ENCODE measurements at regions of chr18 and their contacts with region 1.

Region 1: DNA sequence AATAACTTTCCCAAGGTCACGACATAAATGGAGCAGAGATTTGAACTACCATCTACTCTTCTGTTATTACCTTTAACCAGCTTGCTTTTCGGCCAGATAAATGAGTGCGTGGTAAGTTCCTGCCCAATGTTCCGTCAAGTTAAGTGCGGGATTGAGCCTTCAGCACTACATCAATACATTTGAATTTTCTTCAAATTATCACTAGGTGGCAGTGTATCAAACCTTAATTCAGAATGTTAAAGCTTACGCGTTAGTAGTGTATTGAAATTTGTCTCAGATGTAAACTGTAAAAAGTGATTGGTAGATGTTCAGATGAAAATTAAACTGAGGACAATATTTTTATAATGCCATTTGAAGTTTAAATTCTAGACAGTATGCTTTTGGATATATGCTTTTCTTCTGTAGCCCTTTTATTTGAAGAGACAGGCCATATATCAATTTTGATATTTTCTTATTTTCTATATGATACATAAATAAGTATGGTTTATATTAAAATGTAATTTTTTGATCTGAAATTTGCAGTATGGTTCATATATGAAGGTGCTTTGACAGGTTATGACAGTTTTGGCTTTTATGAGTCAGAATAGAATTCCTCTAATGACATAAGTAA is 681.3 kb downstream of the ADCYAP1 start:
- DNase-seq: no peak
- ATAC-seq: no peak
- H3K4me3 ChIP-seq: no peak overlapping the region
- H3K27ac ChIP-seq: no peak overlapping the region
- H3K4me1 ChIP-seq: no peaks in the 10 kb centered on the region
- H3K27me3 ChIP-seq: no peaks in the 10 kb centered on the region
- CTCF ChIP-seq: peak in 1 of 5 experiments; percentile 25
- POLR2A ChIP-seq: no peak

Region 2: GRCh38 chr18:2536493-2536892 is 950.5 kb after region 1 on chr18:
- in situ Hi-C with region 1: no loop called
- intact Hi-C with region 1: loop called (anchors 5 kb)
- DNase-seq: no peak
- ATAC-seq: no peak
- H3K4me3 ChIP-seq: no peak overlapping the region
- H3K27ac ChIP-seq: no peak overlapping the region
- H3K4me1 ChIP-seq: peaks cover 0 to 3% of the 10 kb centered on the region in 2 donors
- H3K27me3 ChIP-seq: no peaks in the 10 kb centered on the region
- CTCF ChIP-seq: no peak
- POLR2A ChIP-seq: no peak

Region 3: GRCh38 chr18:2559249-2559648 is 973.3 kb after region 1 on chr18:
- in situ Hi-C with region 1: loop called in 1 of 4 experiments (anchors 10 kb)
- intact Hi-C with region 1: no loop called
- DNase-seq: no peak
- ATAC-seq: no peak
- H3K4me3 ChIP-seq: no peak overlapping the region
- H3K27ac ChIP-seq: no peak overlapping the region
- H3K4me1 ChIP-seq: no peaks in the 10 kb centered on the region
- H3K27me3 ChIP-seq: no peaks in the 10 kb centered on the region
- CTCF ChIP-seq: no peak
- POLR2A ChIP-seq: no peak

Measured in gastrocnemius medialis (tissue), 4 donors.